Activated T-helper 2 cell treated with anti-CD3 and anti-CD28 coated beads, Interferon-gamma antibody, Interleukin-2, Interleukin-4, amounts not matched to agents 10 μg/mL and 5 μg/mL and 100 μg/mL, durations not matched to agents 14 hours and 24 hours and 36 hours (primary cell): ENCODE measurements at regions of chr7 and their contacts with region 1.

Region 1: GRCh38 chr7:155815332-155816191 is 3.3 kb upstream of the SHH start:
- DNase-seq: peak; percentile 57
- H3K4me3 Mint-ChIP-seq: no peak overlapping the region
- H3K27ac Mint-ChIP-seq: no peak overlapping the region
- H3K4me1 Mint-ChIP-seq: peaks cover 16% of the 10 kb centered on the region
- H3K27me3 Mint-ChIP-seq: peaks cover 41% of the 10 kb centered on the region

Region 2: GRCh38 chr7:155456738-155457564 is 358.6 kb before region 1 on chr7:
- intact Hi-C with region 1: loop called (anchors 5 kb)
- DNase-seq: no peak
- H3K4me3 Mint-ChIP-seq: peak overlapping the region; percentile 37
- H3K27ac Mint-ChIP-seq: peak overlapping the region; percentile 67
- H3K4me1 Mint-ChIP-seq: peaks cover 9% of the 10 kb centered on the region
- H3K27me3 Mint-ChIP-seq: peaks cover 68% of the 10 kb centered on the region

Region 3: GRCh38 chr7:155631155-155631554 is 184.4 kb before region 1 on chr7:
- intact Hi-C with region 1: no loop called
- DNase-seq: no peak
- H3K4me3 Mint-ChIP-seq: no peak overlapping the region
- H3K27ac Mint-ChIP-seq: no peak overlapping the region
- H3K4me1 Mint-ChIP-seq: peaks cover 4% of the 10 kb centered on the region
- H3K27me3 Mint-ChIP-seq: peaks cover 19% of the 10 kb centered on the region

Region 4: GRCh38 chr7:156473476-156474240 is 658.1 kb after region 1 on chr7:
- intact Hi-C with region 1: loop called (anchors 1 kb)
- DNase-seq: no peak
- H3K4me3 Mint-ChIP-seq: no peak overlapping the region
- H3K27ac Mint-ChIP-seq: no peak overlapping the region
- H3K4me1 Mint-ChIP-seq: no peaks in the 10 kb centered on the region
- H3K27me3 Mint-ChIP-seq: peaks cover 27% of the 10 kb centered on the region

Region 5: GRCh38 chr7:156827587-156828203 is 1012.1 kb after region 1 on chr7:
- intact Hi-C with region 1: loop called (anchors 5 kb)
- DNase-seq: no peak
- H3K4me3 Mint-ChIP-seq: no peak overlapping the region
- H3K27ac Mint-ChIP-seq: no peak overlapping the region
- H3K4me1 Mint-ChIP-seq: no peaks in the 10 kb centered on the region
- H3K27me3 Mint-ChIP-seq: no peaks in the 10 kb centered on the region

Region 6: GRCh38 chr7:157690833-157691585 is 1875.4 kb after region 1 on chr7:
- intact Hi-C with region 1: loop called (anchors 2 kb)
- DNase-seq: no peak
- H3K4me3 Mint-ChIP-seq: peak overlapping the region; percentile 33
- H3K27ac Mint-ChIP-seq: no peak overlapping the region
- H3K4me1 Mint-ChIP-seq: peaks cover 7% of the 10 kb centered on the region
- H3K27me3 Mint-ChIP-seq: peaks cover 60% of the 10 kb centered on the region